Panc1 (cell line): ENCODE measurements at regions of chr14 and their contacts with region 1.

Region 1: GRCh38 chr14:60561845-60562746 is 53.1 kb downstream of the SIX6 start:
- DNase-seq: peak; percentile 43
- ATAC-seq: peak; percentile 93
- H3K4me3 ChIP-seq: no peak overlapping the region
- H3K27ac ChIP-seq: no peak overlapping the region
- H3K4me1 ChIP-seq: no peaks in the 10 kb centered on the region
- H3K27me3 ChIP-seq: no peaks in the 10 kb centered on the region
- CTCF ChIP-seq: peak; percentile 83

Region 2: GRCh38 chr14:60204104-60204842 is 357.8 kb before region 1 on chr14:
- CTCF ChIA-PET with region 1: no interaction called
- POLR2A ChIA-PET with region 1: no interaction called
- in situ Hi-C with region 1: no loop called
- intact Hi-C with region 1: loop called (anchors 10 kb)
- DNase-seq: no peak
- ATAC-seq: no peak
- H3K4me3 ChIP-seq: no peak overlapping the region
- H3K27ac ChIP-seq: no peak overlapping the region
- H3K4me1 ChIP-seq: no peaks in the 10 kb centered on the region
- H3K27me3 ChIP-seq: no peaks in the 10 kb centered on the region
- CTCF ChIP-seq: no peak

Region 3: GRCh38 chr14:60331201-60332045 is 230.7 kb before region 1 on chr14:
- CTCF ChIA-PET with region 1: no interaction called
- POLR2A ChIA-PET with region 1: no interaction called
- in situ Hi-C with region 1: no loop called
- intact Hi-C with region 1: loop called (anchors 5 kb)
- DNase-seq: peak; percentile 43
- ATAC-seq: peak; percentile 85
- H3K4me3 ChIP-seq: peak overlapping the region; percentile 42 to 68
- H3K27ac ChIP-seq: 0 out of 2 replicates have a peak overlapping the region, but pooled peaks have one; percentile 39
- H3K4me1 ChIP-seq: no peaks in the 10 kb centered on the region
- H3K27me3 ChIP-seq: peaks cover 5% of the 10 kb centered on the region
- CTCF ChIP-seq: peak; percentile 86

Region 4: GRCh38 chr14:60349663-60350365 is 212.3 kb before region 1 on chr14:
- CTCF ChIA-PET with region 1: interaction called, 3 read pairs
- POLR2A ChIA-PET with region 1: no interaction called
- in situ Hi-C with region 1: no loop called
- intact Hi-C with region 1: loop called (anchors 2 kb)
- DNase-seq: no peak
- ATAC-seq: peak; percentile 74
- H3K4me3 ChIP-seq: no peak overlapping the region
- H3K27ac ChIP-seq: no peak overlapping the region
- H3K4me1 ChIP-seq: no peaks in the 10 kb centered on the region
- H3K27me3 ChIP-seq: no peaks in the 10 kb centered on the region
- CTCF ChIP-seq: peak; percentile 72

Region 5: DNA sequence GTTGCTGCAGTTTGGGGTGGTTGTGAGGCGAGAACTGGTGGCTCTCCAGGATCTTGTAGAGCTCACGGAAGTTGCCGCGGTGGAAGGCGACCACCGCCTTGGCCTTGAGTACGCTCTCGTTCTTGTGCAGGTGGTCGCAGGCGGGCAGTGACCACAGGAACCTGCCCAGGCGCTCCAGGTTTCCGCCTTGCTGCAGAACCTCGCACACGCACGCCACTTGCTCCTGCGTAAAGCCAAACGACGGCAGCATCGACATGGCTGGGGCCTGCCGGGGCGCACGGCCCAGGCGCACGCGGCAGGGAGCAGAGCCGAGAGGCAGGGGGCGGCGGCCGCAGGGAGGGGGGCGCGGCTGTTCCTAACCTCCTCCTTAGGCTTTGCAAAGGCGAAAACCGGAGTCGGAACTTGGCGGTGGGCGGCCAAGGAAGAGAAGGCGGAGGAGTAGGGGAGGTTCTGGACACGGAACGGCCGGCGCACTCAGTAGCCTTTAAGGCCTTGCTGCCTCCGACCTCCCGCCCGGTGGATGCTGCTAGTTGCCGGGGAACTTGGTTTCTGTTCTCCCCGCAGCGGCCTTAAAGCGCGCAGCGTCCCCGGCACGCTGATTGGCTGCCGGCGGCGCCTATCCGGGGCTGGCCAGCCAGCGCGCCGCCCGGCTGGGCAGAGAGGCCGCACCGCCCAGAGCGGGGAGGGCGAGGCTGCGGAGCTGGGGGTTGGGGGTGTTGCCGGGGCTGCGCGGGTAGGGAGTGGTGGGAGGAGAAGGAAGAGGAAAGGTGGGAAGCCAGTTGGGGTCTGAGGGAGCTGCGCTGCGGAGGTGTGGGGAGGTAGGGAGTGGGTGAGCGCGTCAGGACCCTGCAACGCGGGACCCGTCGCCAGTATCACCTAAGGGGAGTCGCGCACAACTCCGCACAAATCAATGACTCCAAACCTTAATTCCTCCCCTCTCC is 87.1 kb after region 1 on chr14 and contains the start of gene SIX1:
- CTCF ChIA-PET with region 1: interaction called, 14 read pairs
- POLR2A ChIA-PET with region 1: no interaction called
- in situ Hi-C with region 1: no loop called
- intact Hi-C with region 1: no loop called
- DNase-seq: no peak
- ATAC-seq: peak; percentile 93
- H3K4me3 ChIP-seq: peak within 1 kb of the TSS; percentile 69 to 81
- H3K27ac ChIP-seq: peak within 1 kb of the TSS; percentile 90
- H3K4me1 ChIP-seq: peaks cover 29% of the 10 kb centered on the region
- H3K27me3 ChIP-seq: no peaks in the 10 kb centered on the region
- CTCF ChIP-seq: no peak
- total RNA-seq, gene SIX1: 7.4 TPM